PC-9 (cell line): ENCODE measurements at regions of chr3 and their contacts with region 1.

Region 1: DNA sequence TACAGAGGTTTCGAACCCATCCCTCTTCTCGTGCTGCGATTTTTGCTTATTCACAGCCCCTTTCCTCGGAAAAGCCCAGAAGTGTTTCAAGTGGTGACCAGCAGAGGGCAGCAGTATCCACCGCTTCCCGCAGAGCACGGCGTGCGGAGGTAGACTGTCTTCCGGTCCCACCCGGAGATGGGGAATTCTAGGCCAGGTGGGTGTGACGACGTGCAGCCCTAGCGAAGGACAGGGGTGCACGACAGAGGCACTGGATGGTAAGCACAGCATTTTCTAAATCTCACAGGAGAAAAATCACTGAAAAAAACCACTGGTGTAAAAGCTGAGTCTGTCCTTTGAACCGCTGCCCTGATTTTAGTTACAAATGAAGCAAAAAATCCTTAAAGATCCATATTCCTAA is 7.4 kb upstream of the PSMD6 start:
- DNase-seq: peak; percentile 59 to 71
- H3K4me3 ChIP-seq: peak overlapping the region; percentile 42; the same call in 1 of the 2 replicates
- H3K27ac ChIP-seq: no peak overlapping the region
- H3K4me1 ChIP-seq: no peaks in the 10 kb centered on the region; the same call in 1 of the 2 replicates
- H3K27me3 ChIP-seq: no peaks in the 10 kb centered on the region
- CTCF ChIP-seq: peak; percentile 87

Region 2: DNA sequence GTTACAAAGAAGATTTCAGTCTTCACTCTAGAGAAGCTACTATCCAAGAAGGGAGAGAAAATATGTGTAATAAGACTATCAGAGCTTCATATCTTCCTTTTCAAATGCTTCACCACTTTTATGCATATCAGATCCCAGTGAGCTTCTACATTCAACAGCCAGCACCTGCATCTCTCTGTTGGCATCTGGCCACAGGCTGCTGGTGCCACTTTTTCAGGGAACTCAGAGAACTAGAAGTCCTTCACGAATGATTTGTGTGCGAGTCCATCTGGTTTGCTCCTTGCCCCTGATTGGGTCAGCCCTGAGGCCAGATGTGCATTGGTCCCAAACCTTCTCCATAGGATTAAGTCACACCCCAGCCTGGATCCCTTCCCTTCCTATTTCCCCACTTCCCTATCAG is 356.2 kb before region 1 on chr3:
- CTCF ChIA-PET with region 1: no interaction called
- POLR2A ChIA-PET with region 1: no interaction called
- intact Hi-C with region 1: no loop called
- DNase-seq: no peak
- H3K4me3 ChIP-seq: no peak overlapping the region
- H3K27ac ChIP-seq: no peak overlapping the region
- H3K4me1 ChIP-seq: no peaks in the 10 kb centered on the region
- H3K27me3 ChIP-seq: peaks cover 2% of the 10 kb centered on the region; the same call in 1 of the 2 replicates
- CTCF ChIP-seq: no peak

Region 3: GRCh38 chr3:64073158-64073761 is 42.5 kb after region 1 on chr3:
- CTCF ChIA-PET with region 1: no interaction called
- POLR2A ChIA-PET with region 1: interaction called, 21 read pairs
- intact Hi-C with region 1: no loop called
- DNase-seq: no peak
- H3K4me3 ChIP-seq: no peak overlapping the region
- H3K27ac ChIP-seq: no peak overlapping the region
- H3K4me1 ChIP-seq: no peaks in the 10 kb centered on the region
- H3K27me3 ChIP-seq: no peaks in the 10 kb centered on the region
- CTCF ChIP-seq: no peak

Region 4: GRCh38 chr3:64187065-64187959 is 156.6 kb after region 1 on chr3:
- CTCF ChIA-PET with region 1: no interaction called
- POLR2A ChIA-PET with region 1: no interaction called
- intact Hi-C with region 1: loop called (anchors 1 kb)
- DNase-seq: peak; percentile 46 to 68
- H3K4me3 ChIP-seq: no peak overlapping the region
- H3K27ac ChIP-seq: peak overlapping the region; percentile 29; the same call in 1 of the 2 replicates
- H3K4me1 ChIP-seq: peaks cover 50% of the 10 kb centered on the region
- H3K27me3 ChIP-seq: no peaks in the 10 kb centered on the region
- CTCF ChIP-seq: no peak

Region 5: GRCh38 chr3:64238971-64239667 is 208.4 kb after region 1 on chr3:
- CTCF ChIA-PET with region 1: no interaction called
- POLR2A ChIA-PET with region 1: no interaction called
- intact Hi-C with region 1: loop called (anchors 5 kb)
- DNase-seq: peak; percentile 48 to 74
- H3K4me3 ChIP-seq: no peak overlapping the region
- H3K27ac ChIP-seq: no peak overlapping the region
- H3K4me1 ChIP-seq: peaks cover 11% of the 10 kb centered on the region; the same call in 1 of the 2 replicates
- H3K27me3 ChIP-seq: no peaks in the 10 kb centered on the region
- CTCF ChIP-seq: no peak

Region 6: GRCh38 chr3:64355401-64355807 is 324.7 kb after region 1 on chr3:
- CTCF ChIA-PET with region 1: no interaction called
- POLR2A ChIA-PET with region 1: no interaction called
- intact Hi-C with region 1: loop called (anchors 5 kb)
- DNase-seq: peak; percentile 61 to 69
- H3K4me3 ChIP-seq: no peak overlapping the region
- H3K27ac ChIP-seq: peak overlapping the region; percentile 46; the same call in 1 of the 2 replicates
- H3K4me1 ChIP-seq: peaks cover 29% of the 10 kb centered on the region
- H3K27me3 ChIP-seq: no peaks in the 10 kb centered on the region
- CTCF ChIP-seq: no peak

Region 7: DNA sequence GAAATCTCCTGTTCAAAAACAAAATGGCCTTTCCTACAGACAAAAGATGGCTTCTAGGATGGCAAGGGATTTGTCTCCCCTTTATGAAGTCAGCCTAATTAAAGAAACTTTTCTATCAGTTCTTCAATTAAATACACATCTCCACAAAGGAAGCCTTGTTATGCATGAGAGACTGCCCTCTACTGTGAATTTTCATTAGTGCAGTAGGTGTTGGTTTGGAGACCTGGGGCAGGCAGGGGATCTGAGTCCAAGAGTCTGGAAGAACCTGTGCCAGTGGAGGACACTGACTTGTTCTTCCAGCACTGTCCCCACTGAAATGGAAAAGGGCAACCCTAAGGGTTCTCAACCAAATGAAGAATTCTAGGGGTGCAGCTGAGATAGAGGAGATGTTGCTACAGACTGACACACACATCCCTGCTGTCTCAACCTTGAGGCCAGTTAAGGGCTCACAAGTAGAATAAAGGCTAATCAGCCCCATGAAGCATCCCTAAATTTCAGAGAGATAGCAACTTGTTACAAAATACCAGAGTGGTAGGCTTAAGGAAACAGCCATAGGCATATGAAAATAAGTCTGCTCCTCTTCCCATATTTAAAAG is 368.6 kb after region 1 on chr3:
- CTCF ChIA-PET with region 1: no interaction called
- POLR2A ChIA-PET with region 1: no interaction called
- intact Hi-C with region 1: loop called (anchors 1 kb)
- DNase-seq: peak in 1 of 2 experiments; percentile 35
- H3K4me3 ChIP-seq: no peak overlapping the region
- H3K27ac ChIP-seq: no peak overlapping the region
- H3K4me1 ChIP-seq: no peaks in the 10 kb centered on the region
- H3K27me3 ChIP-seq: no peaks in the 10 kb centered on the region
- CTCF ChIP-seq: peak; percentile 76

Region 8: DNA sequence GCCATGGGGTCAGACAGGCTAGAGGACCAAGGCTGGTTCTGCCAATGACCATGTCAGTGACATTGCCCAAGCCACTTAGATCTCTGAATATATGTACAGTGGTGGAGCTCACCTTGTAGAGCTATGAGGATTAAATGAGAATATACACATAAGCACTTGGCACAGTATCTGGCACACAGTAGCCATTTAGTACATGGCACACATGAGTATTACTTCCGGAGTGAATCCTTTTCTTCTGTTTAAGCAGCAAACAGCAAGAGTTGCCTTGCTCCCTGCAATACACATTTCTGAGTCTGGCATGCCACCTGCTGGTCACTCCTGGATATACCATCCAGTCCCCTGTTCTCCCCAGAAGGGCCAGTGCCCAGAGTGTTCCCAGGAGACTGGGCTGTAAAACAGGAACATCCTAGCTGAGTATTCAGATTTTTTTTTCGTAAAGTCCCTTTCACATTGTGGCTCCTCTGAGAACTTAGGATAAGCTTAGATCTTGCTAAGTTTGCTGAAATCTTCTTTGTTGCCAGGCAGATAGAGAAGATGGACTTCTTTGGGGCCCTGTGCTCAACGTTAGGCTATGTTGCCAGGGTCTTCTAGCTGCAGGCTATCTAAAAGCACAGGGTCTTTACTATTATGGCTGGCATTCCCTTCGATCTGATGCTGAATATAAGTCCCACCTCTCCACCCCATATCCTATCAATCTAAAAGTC is 453.7 kb after region 1 on chr3:
- CTCF ChIA-PET with region 1: no interaction called
- POLR2A ChIA-PET with region 1: no interaction called
- intact Hi-C with region 1: loop called (anchors 1 kb)
- DNase-seq: peak; percentile 60 to 75
- H3K4me3 ChIP-seq: no peak overlapping the region
- H3K27ac ChIP-seq: no peak overlapping the region
- H3K4me1 ChIP-seq: no peaks in the 10 kb centered on the region
- H3K27me3 ChIP-seq: no peaks in the 10 kb centered on the region
- CTCF ChIP-seq: peak; percentile 87